ENCODE measurements at regions of chr7 and their contacts with region 1.

Region 1: GRCh38 chr7:93043385-93043985 is 74.3 kb downstream of the SAMD9 start:
- DNase-seq: peak; percentile 96
- ATAC-seq: peak; percentile 70
- H3K4me3 ChIP-seq: peak overlapping the region; percentile 1; the same call in 1 of the 2 replicates
- H3K27ac ChIP-seq: peak overlapping the region; percentile 81
- H3K4me1 ChIP-seq: peaks cover 15% of the 10 kb centered on the region
- H3K27me3 ChIP-seq: no peaks in the 10 kb centered on the region
- CTCF ChIP-seq: no peak
- POLR2A ChIP-seq: no peak
- RAD21 ChIP-seq: no peak; the same call in 1 of the 2 replicates

Region 2: GRCh38 chr7:92656121-92656520 is 387.4 kb before region 1 on chr7:
- CTCF ChIA-PET with region 1: interaction called, 10 read pairs
- POLR2A ChIA-PET with region 1: no interaction called
- dilution Hi-C with region 1: no loop called
- in situ Hi-C with region 1: no loop called
- intact Hi-C with region 1: no loop called
- DNase-seq: no peak
- ATAC-seq: no peak
- H3K4me3 ChIP-seq: no peak overlapping the region
- H3K27ac ChIP-seq: no peak overlapping the region
- H3K4me1 ChIP-seq: peaks cover 2% of the 10 kb centered on the region; the same call in 1 of the 2 replicates
- H3K27me3 ChIP-seq: no peaks in the 10 kb centered on the region
- CTCF ChIP-seq: no peak
- POLR2A ChIP-seq: no peak
- RAD21 ChIP-seq: no peak

Measured in IMR-90 (cell line).